Esophagus squamous epithelium (tissue), 5 donors: ENCODE measurements at regions of chr7 and their contacts with region 1.

Region 1: DNA sequence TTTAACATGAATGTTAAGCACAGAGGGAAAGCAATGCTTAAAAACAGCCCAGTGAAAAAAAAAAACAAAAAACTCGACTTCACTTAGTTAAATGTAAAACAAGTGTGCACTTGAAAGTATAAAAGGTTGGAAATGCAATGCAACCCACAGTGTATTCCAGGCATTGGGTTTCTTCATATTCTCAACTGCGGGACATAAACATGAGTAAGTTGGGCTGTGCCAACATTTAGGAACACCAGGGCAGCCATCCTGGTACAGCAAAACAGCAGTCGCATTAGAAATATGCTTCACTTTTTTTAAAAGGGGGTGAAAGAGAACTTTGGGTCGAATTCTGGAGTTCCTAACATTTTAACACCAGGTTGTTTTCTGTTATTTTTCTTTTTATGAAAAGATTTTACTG is 937 bp downstream of the STEAP1 start:
- DNase-seq: no peak
- H3K4me3 ChIP-seq: peak overlapping the region in 2 of 4 donors; percentile 61 to 67
- H3K27ac ChIP-seq: peak overlapping the region in 2 of 4 donors; percentile 82 to 83
- H3K4me1 ChIP-seq: peaks cover 0 to 44% (median 0%) of the 10 kb centered on the region in 3 donors
- H3K27me3 ChIP-seq: no peaks in the 10 kb centered on the region
- CTCF ChIP-seq: no peak
- POLR2A ChIP-seq: no peak

Region 2: DNA sequence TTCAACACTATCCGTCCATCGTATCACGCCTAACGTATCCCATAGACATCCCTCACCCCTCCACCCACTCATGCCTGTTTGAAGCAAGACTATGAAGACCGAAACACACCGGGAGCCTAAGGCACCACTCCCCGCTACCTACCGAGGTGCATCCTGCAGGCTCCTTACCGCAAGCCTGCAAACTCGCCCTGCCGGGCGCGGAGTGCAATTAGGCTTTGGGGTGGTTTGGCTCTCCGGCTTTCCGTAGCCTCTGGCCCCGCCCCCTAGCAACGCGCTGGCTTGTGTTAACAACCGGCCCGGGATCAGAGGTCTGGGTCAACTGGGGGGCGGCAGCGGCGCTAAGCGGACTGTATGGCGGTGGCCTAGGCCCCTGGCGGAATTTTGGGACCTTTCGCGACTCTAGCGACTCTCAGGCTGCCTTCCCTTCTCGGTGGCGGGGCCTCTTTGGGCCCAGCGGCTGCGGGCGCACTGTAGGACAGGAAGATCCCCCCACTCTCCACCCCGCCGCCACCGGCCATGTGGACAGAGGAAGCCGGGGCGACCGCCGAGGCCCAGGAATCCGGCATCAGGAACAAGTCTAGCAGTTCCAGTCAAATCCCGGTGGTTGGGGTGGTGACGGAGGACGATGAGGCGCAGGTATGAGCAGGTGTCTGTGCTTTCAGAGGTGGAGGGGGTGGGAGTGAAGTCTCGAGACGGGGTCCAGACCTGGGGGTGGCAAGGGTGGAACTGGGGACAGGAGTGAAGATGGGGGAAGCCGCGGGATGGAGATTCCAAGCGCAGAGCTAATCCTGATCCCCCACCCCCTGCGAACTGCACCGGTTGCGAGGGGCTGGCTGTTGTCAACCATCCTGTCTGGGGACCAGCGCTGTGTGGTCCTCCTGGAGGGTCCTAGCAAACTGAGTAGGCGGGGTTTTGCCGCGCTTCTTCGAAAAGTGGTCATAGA is 90.0 kb after region 1 on chr7 and contains the start of gene CFAP69:
- intact Hi-C with region 1: loop called (anchors 10 kb)
- DNase-seq: peak; percentile 22
- H3K4me3 ChIP-seq: peak within 1 kb of the TSS; percentile 78 to 96 (median 82)
- H3K27ac ChIP-seq: peak within 1 kb of the TSS; percentile 74 to 82 (median 75)
- H3K4me1 ChIP-seq: peaks cover 0 to 29% (median 5%) of the 10 kb centered on the region in 3 donors
- H3K27me3 ChIP-seq: no peaks in the 10 kb centered on the region
- CTCF ChIP-seq: peak in 5 of 6 experiments; percentile 26 to 59 (median 45)
- POLR2A ChIP-seq: peak in 1 of 4 donors; percentile 39
- total RNA-seq, gene CFAP69: 1.8 to 9.0 (median 2.0) TPM

Region 3: DNA sequence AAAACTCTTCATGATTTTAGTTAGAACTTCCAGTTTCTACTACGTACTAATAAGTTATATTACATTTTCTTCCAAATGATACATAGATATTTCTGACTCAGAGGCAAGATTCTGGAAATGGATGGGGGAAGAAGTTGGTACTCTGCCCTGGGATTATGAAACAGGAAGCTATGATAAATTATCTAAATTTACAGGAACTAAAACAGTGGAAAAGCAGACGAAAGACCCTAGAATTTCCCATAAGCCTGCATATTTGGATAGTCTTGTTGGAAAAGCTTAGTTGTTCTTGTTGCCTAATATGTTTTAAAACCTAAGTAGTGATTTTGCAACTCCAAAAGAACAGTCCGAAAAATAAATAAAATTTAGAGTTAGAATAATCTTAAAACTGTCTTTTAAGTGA is 111.6 kb after region 1 on chr7:
- intact Hi-C with region 1: loop called (anchors 5 kb)
- DNase-seq: no peak
- H3K4me3 ChIP-seq: no peak overlapping the region
- H3K27ac ChIP-seq: peak overlapping the region in 2 of 4 donors; percentile 63 to 79
- H3K4me1 ChIP-seq: no peaks in the 10 kb centered on the region
- H3K27me3 ChIP-seq: no peaks in the 10 kb centered on the region
- CTCF ChIP-seq: no peak
- POLR2A ChIP-seq: no peak

Region 4: GRCh38 chr7:90424720-90425119 is 269.5 kb after region 1 on chr7:
- intact Hi-C with region 1: loop called (anchors 10 kb)
- DNase-seq: no peak
- H3K4me3 ChIP-seq: no peak overlapping the region
- H3K27ac ChIP-seq: no peak overlapping the region
- H3K4me1 ChIP-seq: no peaks in the 10 kb centered on the region
- H3K27me3 ChIP-seq: no peaks in the 10 kb centered on the region
- CTCF ChIP-seq: no peak
- POLR2A ChIP-seq: no peak